ENCODE measurements at regions of chr4 and their contacts with region 1.

Region 1: GRCh38 chr4:77156533-77156911 is 485 bp upstream of the CCNG2 start:
- DNase-seq: peak in 6 of 9 donors; percentile 99 to 100 (median 99)
- ATAC-seq: peak; percentile 96
- H3K4me3 ChIP-seq: peak overlapping the region; percentile 99
- H3K4me3 Mint-ChIP-seq: peak overlapping the region; percentile 92 to 99 (median 98)
- H3K27ac ChIP-seq: peak overlapping the region; percentile 85
- H3K27ac Mint-ChIP-seq: peak overlapping the region; percentile 88 to 99 (median 99)
- H3K4me1 ChIP-seq: peaks cover 10 to 17% of the 10 kb centered on the region in 2 donors
- H3K4me1 Mint-ChIP-seq: peaks cover 13 to 52% (median 43%) of the 10 kb centered on the region in 7 donors
- H3K27me3 ChIP-seq: no peaks in the 10 kb centered on the region
- H3K27me3 Mint-ChIP-seq: peaks cover 0 to 6% (median 0%) of the 10 kb centered on the region in 5 donors

Region 2: DNA sequence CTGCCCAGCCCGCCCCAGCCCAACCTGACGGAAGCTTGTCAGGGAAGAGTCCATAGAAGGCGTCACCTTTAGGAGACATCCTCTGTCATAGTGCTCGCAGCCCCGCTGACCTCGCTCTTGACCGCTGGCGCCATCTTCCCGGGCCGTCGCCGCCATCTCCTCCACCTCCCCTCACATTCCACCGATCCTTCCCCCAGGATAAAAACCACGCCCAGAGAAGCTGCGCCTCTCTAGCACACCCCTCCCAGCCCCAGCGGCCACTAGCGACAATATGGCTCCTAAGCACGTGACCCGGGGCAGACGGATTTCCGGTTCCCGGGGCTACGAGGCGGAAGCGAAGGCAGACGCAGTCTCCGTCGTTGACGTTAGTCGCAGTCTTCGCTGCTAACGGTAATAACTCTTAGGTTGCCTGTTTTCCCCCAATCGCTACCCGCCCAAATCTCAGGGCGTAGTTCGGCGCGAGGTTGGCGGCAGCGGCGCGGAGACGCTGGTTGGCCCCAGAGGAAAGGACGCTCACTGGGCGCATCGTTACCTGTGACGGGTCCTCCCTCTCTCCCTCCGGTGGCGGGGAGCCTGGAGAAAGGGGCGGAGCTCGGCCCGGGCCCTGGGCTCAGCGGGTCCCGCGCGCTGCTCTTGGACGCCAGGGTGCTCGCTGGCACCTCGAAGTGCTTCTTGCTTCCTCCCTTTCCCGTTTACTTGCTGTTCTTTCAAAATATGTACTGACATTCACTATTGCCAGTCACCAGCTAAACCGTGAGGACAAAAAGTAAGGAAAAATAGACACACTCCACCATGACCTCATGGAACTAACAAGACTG is 1642.2 kb before region 1 on chr4 and contains the starts of genes RCHY1 and THAP6:
- CTCF ChIA-PET with region 1: no interaction called
- POLR2A ChIA-PET with region 1: no interaction called
- intact Hi-C with region 1: loop called in 1 of 2 experiments (anchors 2 kb)
- DNase-seq: peak; percentile 82 to 95 (median 93)
- ATAC-seq: peak; percentile 92
- H3K4me3 ChIP-seq: peak within 1 kb of the TSS; percentile 79
- H3K4me3 Mint-ChIP-seq: peak within 1 kb of the TSS in 1 of 10 donors; percentile 97
- H3K27ac ChIP-seq: peak within 1 kb of the TSS; percentile 98
- H3K27ac Mint-ChIP-seq: peak within 1 kb of the TSS in 7 of 9 donors; percentile 96 to 100 (median 98)
- H3K4me1 ChIP-seq: peaks cover 53 to 56% of the 10 kb centered on the region in 2 donors
- H3K4me1 Mint-ChIP-seq: peaks cover 30 to 63% (median 49%) of the 10 kb centered on the region in 7 donors
- H3K27me3 ChIP-seq: no peaks in the 10 kb centered on the region
- H3K27me3 Mint-ChIP-seq: no peaks in the 10 kb centered on the region
- total RNA-seq, gene RCHY1: 23.0 to 37.8 (median 29.6) TPM
- total RNA-seq, gene THAP6: 18.2 to 43.9 (median 25.1) TPM

Region 3: GRCh38 chr4:75940692-75941253 is 1215.7 kb before region 1 on chr4 and contains the start of gene NAAA:
- CTCF ChIA-PET with region 1: no interaction called
- POLR2A ChIA-PET with region 1: no interaction called
- intact Hi-C with region 1: loop called in 1 of 2 experiments (anchors 5 kb)
- DNase-seq: peak; percentile 57 to 87 (median 75)
- ATAC-seq: peak; percentile 92
- H3K4me3 ChIP-seq: peak within 1 kb of the TSS; percentile 100
- H3K4me3 Mint-ChIP-seq: peak within 1 kb of the TSS; percentile 96 to 99 (median 98)
- H3K27ac ChIP-seq: peak within 1 kb of the TSS; percentile 80
- H3K27ac Mint-ChIP-seq: peak within 1 kb of the TSS; percentile 90 to 98 (median 94)
- H3K4me1 ChIP-seq: peaks cover 9 to 12% of the 10 kb centered on the region in 2 donors
- H3K4me1 Mint-ChIP-seq: peaks cover 12 to 34% (median 22%) of the 10 kb centered on the region in 7 donors
- H3K27me3 ChIP-seq: no peaks in the 10 kb centered on the region
- H3K27me3 Mint-ChIP-seq: no peaks in the 10 kb centered on the region
- total RNA-seq, gene NAAA: 36.9 to 103 (median 80.3) TPM

Region 4: GRCh38 chr4:76993787-76994641 is 162.5 kb before region 1 on chr4:
- CTCF ChIA-PET with region 1: no interaction called
- POLR2A ChIA-PET with region 1: interaction called, 5 read pairs
- intact Hi-C with region 1: loop called (anchors 1 to 5 kb)
- DNase-seq: peak in 8 of 9 donors; percentile 42 to 90 (median 86)
- ATAC-seq: peak; percentile 82
- H3K4me3 ChIP-seq: peak overlapping the region; percentile 52
- H3K4me3 Mint-ChIP-seq: peak overlapping the region; percentile 56 to 94 (median 79)
- H3K27ac ChIP-seq: peak overlapping the region; percentile 19
- H3K27ac Mint-ChIP-seq: peak overlapping the region; percentile 73 to 97 (median 84)
- H3K4me1 ChIP-seq: peaks cover 28 to 50% of the 10 kb centered on the region in 2 donors
- H3K4me1 Mint-ChIP-seq: peaks cover 39 to 84% (median 59%) of the 10 kb centered on the region in 7 donors
- H3K27me3 ChIP-seq: no peaks in the 10 kb centered on the region
- H3K27me3 Mint-ChIP-seq: peaks cover 0 to 27% (median 0%) of the 10 kb centered on the region in 5 donors

Region 5: GRCh38 chr4:77167866-77168265 is 11.3 kb after region 1 on chr4:
- CTCF ChIA-PET with region 1: interaction called, 5 read pairs
- POLR2A ChIA-PET with region 1: interaction called, 4 read pairs
- intact Hi-C with region 1: loop called in 1 of 2 experiments (anchors 1 kb)
- DNase-seq: no peak
- ATAC-seq: no peak
- H3K4me3 ChIP-seq: no peak overlapping the region
- H3K4me3 Mint-ChIP-seq: no peak overlapping the region
- H3K27ac ChIP-seq: no peak overlapping the region
- H3K27ac Mint-ChIP-seq: peak overlapping the region in 1 of 9 donors; percentile 74
- H3K4me1 ChIP-seq: no peaks in the 10 kb centered on the region
- H3K4me1 Mint-ChIP-seq: peaks cover 2 to 15% (median 6%) of the 10 kb centered on the region in 7 donors
- H3K27me3 ChIP-seq: no peaks in the 10 kb centered on the region
- H3K27me3 Mint-ChIP-seq: no peaks in the 10 kb centered on the region

Region 6: DNA sequence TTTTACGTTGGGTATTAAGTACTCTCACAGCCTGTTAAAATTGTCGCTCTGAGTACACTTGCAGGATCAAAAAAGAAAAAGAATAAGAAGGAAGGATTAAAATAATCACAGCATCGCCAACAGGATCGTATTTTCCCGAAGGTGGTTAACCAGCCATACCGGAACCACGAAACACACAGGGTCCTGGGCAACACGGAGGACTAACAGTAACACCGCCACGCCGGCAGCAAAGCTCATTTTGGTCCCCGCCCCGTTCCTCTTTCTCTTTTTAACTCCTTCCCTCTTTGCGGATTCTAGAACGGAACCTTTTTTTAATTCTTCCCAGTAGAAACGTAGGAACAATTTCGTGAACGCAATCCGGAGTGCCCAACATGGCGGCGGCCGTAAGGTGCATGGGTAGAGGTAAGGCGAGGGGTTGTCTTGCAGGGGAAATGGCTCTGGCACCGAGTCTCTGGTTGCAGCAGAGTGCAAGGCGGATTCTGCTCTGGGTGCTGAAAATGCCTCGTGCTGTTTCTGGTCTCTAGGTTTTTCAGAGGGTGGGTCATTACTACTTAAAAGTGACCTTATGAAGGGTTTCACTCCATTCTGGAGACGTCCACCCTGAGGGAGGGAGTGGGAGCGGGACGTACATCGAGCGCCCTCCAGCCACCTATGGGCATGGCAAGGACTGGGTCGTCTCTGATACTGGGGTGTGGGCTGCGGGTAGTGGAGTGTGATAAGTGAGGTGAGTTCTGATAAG is 706.1 kb after region 1 on chr4 and contains the start of gene MRPL1:
- CTCF ChIA-PET with region 1: no interaction called
- POLR2A ChIA-PET with region 1: interaction called, 3 read pairs
- intact Hi-C with region 1: loop called (anchors 2 kb)
- DNase-seq: peak; percentile 68 to 95 (median 92)
- ATAC-seq: peak; percentile 87
- H3K4me3 ChIP-seq: peak within 1 kb of the TSS; percentile 76
- H3K4me3 Mint-ChIP-seq: peak within 1 kb of the TSS; percentile 92 to 99 (median 96)
- H3K27ac ChIP-seq: peak within 1 kb of the TSS; percentile 99
- H3K27ac Mint-ChIP-seq: peak within 1 kb of the TSS; percentile 97 to 100 (median 99)
- H3K4me1 ChIP-seq: peaks cover 24 to 31% of the 10 kb centered on the region in 2 donors
- H3K4me1 Mint-ChIP-seq: peaks cover 33 to 88% (median 71%) of the 10 kb centered on the region in 7 donors
- H3K27me3 ChIP-seq: no peaks in the 10 kb centered on the region
- H3K27me3 Mint-ChIP-seq: peaks cover 0 to 4% (median 0%) of the 10 kb centered on the region in 5 donors
- total RNA-seq, gene MRPL1: 13.0 to 37.9 (median 17.8) TPM

Measured in naive thymus-derived CD4-positive, alpha-beta T cell (primary cell).